K562 (cell line): ENCODE measurements at regions of chr1 and their contacts with region 1.

Region 1: GRCh38 chr1:212152308-212152693 is 116.8 kb downstream of the DTL start:
- DNase-seq: peak; percentile 60 to 96 (median 79)
- ATAC-seq: peak; percentile 86
- H3K4me3 ChIP-seq: no peak overlapping the region
- H3K27ac ChIP-seq: peak overlapping the region; percentile 86
- H3K4me1 ChIP-seq: peaks cover 34 to 47% of the 10 kb centered on the region in 2 experiments
- H3K27me3 ChIP-seq: no peaks in the 10 kb centered on the region
- CTCF ChIP-seq: no peak
- EP300 ChIP-seq: peak; percentile 100
- POLR2A ChIP-seq: no peak
- RAD21 ChIP-seq: peak in 1 of 2 experiments; percentile 55; a peak in 2 of 4 replicates

Region 2: GRCh38 chr1:211797994-211798393 is 354.3 kb before region 1 on chr1:
- CTCF ChIA-PET with region 1: no interaction called
- POLR2A ChIA-PET with region 1: no interaction called
- in situ Hi-C with region 1: no loop called
- intact Hi-C with region 1: no loop called
- DNase-seq: no peak
- ATAC-seq: no peak
- H3K4me3 ChIP-seq: no peak overlapping the region
- H3K27ac ChIP-seq: no peak overlapping the region
- H3K4me1 ChIP-seq: peaks cover 0 to 8% of the 10 kb centered on the region in 2 experiments; a peak in 1 of 5 replicates
- H3K27me3 ChIP-seq: no peaks in the 10 kb centered on the region
- CTCF ChIP-seq: no peak
- EP300 ChIP-seq: no peak
- POLR2A ChIP-seq: no peak
- RAD21 ChIP-seq: no peak

Region 3: DNA sequence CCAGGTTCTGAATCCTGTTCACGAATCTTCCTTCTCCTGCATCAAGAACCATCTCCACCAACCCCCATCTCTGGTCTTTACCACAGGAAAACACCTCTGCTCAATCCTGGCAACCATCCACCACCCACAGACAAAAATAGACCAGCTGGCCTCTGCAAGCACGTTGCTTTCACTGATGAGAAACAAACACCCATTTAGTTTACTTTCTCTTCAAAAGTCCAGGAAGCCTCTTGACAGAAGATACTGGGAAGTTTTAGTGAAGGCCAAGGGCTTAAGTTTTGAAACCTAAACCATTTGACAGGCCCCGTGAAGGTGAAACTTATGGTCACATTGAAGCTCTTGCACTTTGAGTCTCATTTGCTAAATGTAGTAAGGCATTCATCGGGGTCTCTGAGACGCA is 10.3 kb after region 1 on chr1:
- CTCF ChIA-PET with region 1: no interaction called
- POLR2A ChIA-PET with region 1: interaction called, 27 read pairs
- in situ Hi-C with region 1: no loop called
- intact Hi-C with region 1: no loop called
- DNase-seq: peak in 1 of 4 experiments; percentile 47
- ATAC-seq: no peak
- H3K4me3 ChIP-seq: no peak overlapping the region
- H3K27ac ChIP-seq: no peak overlapping the region
- H3K4me1 ChIP-seq: peaks cover 33 to 49% of the 10 kb centered on the region in 2 experiments
- H3K27me3 ChIP-seq: no peaks in the 10 kb centered on the region
- CTCF ChIP-seq: no peak
- EP300 ChIP-seq: no peak
- POLR2A ChIP-seq: no peak
- RAD21 ChIP-seq: no peak; a peak in 1 of 4 replicates

Region 4: GRCh38 chr1:212207822-212208520 is 55.7 kb after region 1 on chr1:
- CTCF ChIA-PET with region 1: no interaction called
- POLR2A ChIA-PET with region 1: interaction called, 4 read pairs
- in situ Hi-C with region 1: no loop called
- intact Hi-C with region 1: loop called (anchors 2 kb)
- DNase-seq: no peak
- ATAC-seq: no peak
- H3K4me3 ChIP-seq: no peak overlapping the region
- H3K27ac ChIP-seq: no peak overlapping the region
- H3K4me1 ChIP-seq: peaks cover 0 to 10% of the 10 kb centered on the region in 2 experiments; a peak in 3 of 5 replicates
- H3K27me3 ChIP-seq: no peaks in the 10 kb centered on the region
- CTCF ChIP-seq: no peak
- EP300 ChIP-seq: no peak
- POLR2A ChIP-seq: no peak
- RAD21 ChIP-seq: no peak

Region 5: GRCh38 chr1:212218911-212219310 is 66.6 kb after region 1 on chr1:
- CTCF ChIA-PET with region 1: no interaction called
- POLR2A ChIA-PET with region 1: no interaction called
- in situ Hi-C with region 1: no loop called
- intact Hi-C with region 1: loop called (anchors 5 kb)
- DNase-seq: no peak
- ATAC-seq: no peak; the same call in 2 of the 3 replicates
- H3K4me3 ChIP-seq: no peak overlapping the region
- H3K27ac ChIP-seq: no peak overlapping the region
- H3K4me1 ChIP-seq: peaks cover 13 to 33% of the 10 kb centered on the region in 2 experiments; a peak in 3 of 5 replicates
- H3K27me3 ChIP-seq: no peaks in the 10 kb centered on the region
- CTCF ChIP-seq: no peak
- EP300 ChIP-seq: no peak
- POLR2A ChIP-seq: no peak
- RAD21 ChIP-seq: no peak

Region 6: DNA sequence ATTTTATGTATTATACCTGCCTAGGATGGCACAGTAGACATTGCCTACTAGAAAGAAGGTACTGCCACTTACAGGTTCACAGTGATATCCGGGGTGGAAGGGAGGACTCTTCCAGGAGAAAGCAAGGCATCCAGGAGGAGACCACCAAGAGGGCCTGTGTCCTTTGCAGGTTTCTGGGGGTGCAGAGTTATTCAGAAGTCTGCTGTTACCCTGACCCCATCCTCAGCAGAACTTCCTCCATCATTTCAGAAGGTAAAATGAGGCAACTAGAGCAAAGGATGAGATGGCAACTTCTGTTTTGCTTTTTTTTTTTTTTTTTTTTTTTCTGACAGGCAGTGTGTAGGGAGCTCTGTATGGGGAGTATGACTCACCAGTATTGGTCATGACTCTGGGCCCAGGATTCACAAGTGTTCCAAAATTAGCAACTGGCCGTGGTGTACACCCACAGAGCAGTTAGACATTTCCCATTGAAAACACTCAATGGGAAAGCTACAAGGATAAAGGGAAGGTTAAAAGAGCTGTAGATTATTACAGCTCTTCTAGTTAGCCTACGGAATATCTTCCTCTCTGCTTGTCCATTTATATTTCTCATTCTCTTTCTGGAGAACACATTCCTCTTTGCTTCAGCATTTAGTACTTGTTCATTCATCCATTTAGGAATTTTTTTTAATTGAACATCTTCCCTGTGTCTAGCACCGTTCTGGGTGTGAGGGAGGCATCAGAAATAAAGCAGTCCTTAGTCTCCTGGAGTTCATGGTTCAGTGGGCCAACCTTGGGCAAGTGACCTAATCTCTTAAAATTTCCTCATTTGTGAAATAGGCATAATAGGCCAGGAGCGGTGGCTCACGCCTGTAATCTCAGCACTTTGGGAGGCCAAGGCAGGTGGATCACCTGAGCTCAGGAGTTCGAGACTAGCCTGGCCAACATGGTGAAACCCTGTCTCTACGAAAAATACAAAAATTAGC is 82.4 kb after region 1 on chr1:
- CTCF ChIA-PET with region 1: no interaction called
- POLR2A ChIA-PET with region 1: interaction called, 6 read pairs
- in situ Hi-C with region 1: no loop called
- intact Hi-C with region 1: loop called (anchors 5 kb)
- DNase-seq: peak; percentile 76 to 93 (median 84)
- ATAC-seq: peak; percentile 93
- H3K4me3 ChIP-seq: no peak overlapping the region
- H3K27ac ChIP-seq: peak overlapping the region; percentile 78
- H3K4me1 ChIP-seq: peaks cover 24 to 61% of the 10 kb centered on the region in 2 experiments
- H3K27me3 ChIP-seq: no peaks in the 10 kb centered on the region
- CTCF ChIP-seq: no peak
- EP300 ChIP-seq: peak; percentile 76
- POLR2A ChIP-seq: no peak
- RAD21 ChIP-seq: 0 out of 4 replicates have a peak, but pooled peaks have one; percentile 12 to 17

Region 7: DNA sequence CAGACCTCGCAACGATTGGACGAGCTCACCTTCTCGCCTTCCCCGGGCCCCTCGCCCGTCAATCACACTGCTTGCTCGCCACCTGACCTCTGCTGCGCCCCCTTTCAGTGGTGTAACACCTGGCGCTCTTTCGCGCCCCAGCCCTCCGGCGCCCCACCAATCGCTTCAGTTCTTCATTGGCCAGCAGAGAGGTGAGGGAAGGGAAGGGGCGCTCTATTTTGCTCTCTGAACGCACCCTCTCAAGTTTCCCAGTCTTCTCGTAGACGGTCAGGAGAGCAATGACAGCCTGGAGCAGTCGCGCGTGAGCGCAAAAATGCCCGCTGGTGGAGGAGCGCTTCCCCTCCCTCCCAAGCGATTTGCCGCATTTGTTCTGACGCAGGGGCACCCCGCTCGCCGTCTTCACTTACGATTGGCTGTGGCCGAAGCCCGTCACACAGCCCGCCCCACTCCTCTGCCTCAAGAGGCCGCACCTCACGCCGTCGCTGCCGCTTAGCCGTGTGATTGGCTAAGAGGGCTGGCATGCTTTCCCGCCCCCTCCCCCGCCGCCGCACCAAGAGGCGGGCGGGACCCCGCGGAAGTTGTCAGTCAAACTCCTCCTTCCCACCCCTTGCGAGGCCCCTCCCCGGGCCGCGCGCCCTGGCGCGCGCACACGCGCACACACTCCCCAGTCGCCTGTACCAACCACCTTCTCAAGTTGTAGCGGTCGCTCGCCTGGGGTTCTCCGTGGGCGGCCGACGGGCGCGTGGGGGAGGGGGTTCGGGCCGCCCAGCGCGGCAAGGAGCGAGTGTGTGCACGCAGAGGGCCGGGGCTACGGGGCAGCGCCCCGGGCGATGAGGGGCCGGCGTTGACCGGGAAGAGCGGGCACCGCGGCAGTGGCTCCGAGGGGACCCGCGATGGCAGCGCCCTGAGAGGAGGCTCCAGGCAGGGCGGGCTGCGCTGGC is 132.7 kb after region 1 on chr1 and contains the start of gene PPP2R5A:
- CTCF ChIA-PET with region 1: no interaction called
- POLR2A ChIA-PET with region 1: interaction called, 6 read pairs
- in situ Hi-C with region 1: no loop called
- intact Hi-C with region 1: loop called (anchors 1 kb)
- DNase-seq: peak; percentile 98 to 100 (median 98)
- ATAC-seq: peak; percentile 94
- H3K4me3 ChIP-seq: peak within 1 kb of the TSS; percentile 86
- H3K27ac ChIP-seq: peak within 1 kb of the TSS; percentile 95
- H3K4me1 ChIP-seq: peaks cover 20 to 23% of the 10 kb centered on the region in 2 experiments; a peak in 4 of 5 replicates
- H3K27me3 ChIP-seq: no peaks in the 10 kb centered on the region
- CTCF ChIP-seq: peak; percentile 49 to 63 (median 49); a peak in 5 of 6 replicates
- EP300 ChIP-seq: peak; percentile 44
- POLR2A ChIP-seq: peak; percentile 96
- RAD21 ChIP-seq: peak; percentile 38 to 47
- polyA plus RNA-seq, gene PPP2R5A: 26.9 to 31.2 TPM